ENCODE measurements at regions of chr10 and their contacts with region 1.

Region 1: DNA sequence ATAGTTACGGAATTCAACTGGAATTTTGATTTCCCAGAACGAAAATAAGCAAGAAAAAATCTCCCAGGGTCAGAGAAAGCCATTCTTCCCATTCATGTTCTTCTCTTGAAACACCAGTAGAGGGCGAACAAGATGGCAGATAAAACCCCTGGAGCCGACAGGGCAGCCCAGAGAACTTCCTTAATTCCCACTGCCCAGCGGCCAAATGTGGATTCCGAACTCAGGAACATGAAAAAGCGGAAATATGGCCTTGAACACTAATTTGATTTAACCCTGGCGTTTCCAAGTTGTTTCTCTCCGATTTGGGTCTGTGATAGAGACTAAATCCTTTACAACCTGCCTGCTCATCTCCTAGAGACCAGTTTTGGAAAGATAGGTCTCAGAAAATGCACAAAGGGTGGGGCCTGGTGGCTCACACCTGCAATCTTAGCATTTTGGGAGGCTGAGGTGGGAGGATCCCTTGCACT is 100.7 kb upstream of the WAC start:
- DNase-seq: peak; percentile 70
- ATAC-seq: peak; percentile 95

Region 2: DNA sequence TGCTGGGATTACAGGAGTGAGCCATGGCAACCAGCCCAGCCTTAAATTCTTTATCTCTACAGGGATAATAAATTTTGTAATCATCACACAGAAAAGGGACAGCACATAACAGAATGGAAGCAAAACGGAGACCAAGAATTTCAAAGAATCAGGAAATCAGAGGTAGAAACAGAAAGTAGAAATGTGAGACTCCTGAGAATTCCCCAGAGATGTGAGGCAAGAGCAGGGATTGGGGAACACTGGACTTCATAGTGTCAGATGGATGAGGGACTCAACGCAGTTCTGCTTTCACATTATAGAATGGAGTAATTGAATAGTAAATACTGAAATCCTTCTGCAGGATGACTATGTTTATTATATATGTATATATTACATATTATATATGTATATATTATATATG is 76.9 kb before region 1 on chr10:
- intact Hi-C with region 1: no loop called
- DNase-seq: no peak
- ATAC-seq: no peak

Region 3: DNA sequence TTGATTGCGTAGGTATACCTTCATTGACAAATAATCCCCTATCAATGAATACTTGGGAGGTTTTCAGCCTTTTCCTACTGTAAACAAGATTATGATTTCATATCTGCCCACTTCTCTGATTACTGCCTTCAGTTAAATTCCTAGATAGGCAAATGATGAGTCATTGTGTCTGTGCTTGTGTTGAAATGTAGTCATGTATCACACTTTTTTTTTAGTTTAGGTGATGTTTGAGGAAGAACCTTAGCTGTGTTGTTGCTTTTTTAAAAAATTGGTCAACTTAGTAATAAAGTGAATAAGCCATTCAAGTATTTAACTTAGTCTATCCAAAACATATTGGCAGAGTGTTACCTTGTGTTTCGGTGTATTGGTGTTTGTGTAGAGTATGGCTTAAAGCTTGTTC is 160.7 kb after region 1 on chr10:
- intact Hi-C with region 1: loop called (anchors 10 kb)
- DNase-seq: no peak
- ATAC-seq: no peak

Measured in Right ventricle myocardium superior (tissue), 1 donor.